Activated CD4-positive, alpha-beta T cell treated with anti-CD3 and anti-CD28 coated beads, Interleukin-2, amount 10 ng/mL, durations not matched to agents 24 days and 14 days (primary cell): ENCODE measurements at regions of chr10 and their contacts with region 1.

Region 1: GRCh38 chr10:132446661-132447194 is 49.7 kb downstream of the PWWP2B start:
- DNase-seq: peak; percentile 91
- H3K4me3 Mint-ChIP-seq: peak overlapping the region; percentile 76
- H3K27ac Mint-ChIP-seq: peak overlapping the region; percentile 97
- H3K4me1 Mint-ChIP-seq: peaks cover 29% of the 10 kb centered on the region
- H3K27me3 Mint-ChIP-seq: no peaks in the 10 kb centered on the region

Region 2: DNA sequence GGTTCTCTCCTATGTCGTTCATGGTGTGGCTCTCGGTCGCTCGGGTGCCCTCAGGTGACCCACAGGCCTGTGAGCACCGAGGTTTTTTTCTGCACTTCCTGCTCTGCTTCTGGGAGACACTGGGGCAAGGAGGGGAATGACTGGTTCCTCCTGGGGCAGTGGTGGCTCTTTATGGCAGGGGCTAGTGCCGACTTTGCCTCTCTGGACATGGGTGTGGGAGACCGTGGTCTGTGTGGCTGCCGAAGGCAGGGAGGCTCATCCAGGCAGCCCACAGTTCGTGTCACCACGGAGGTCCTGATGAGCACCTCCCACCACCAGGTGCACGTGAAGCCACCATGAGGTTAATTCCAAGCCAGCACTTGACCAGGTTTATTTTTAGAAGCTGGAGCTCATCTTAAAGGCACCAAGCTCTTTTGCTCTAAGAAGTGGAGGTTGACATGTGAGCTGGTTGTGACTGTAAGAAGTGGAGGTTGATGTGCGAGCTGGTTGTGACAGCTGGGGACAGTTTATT is 284.7 kb before region 1 on chr10:
- intact Hi-C with region 1: loop called (anchors 1 kb)
- DNase-seq: peak; percentile 89
- H3K4me3 Mint-ChIP-seq: peak overlapping the region; percentile 83
- H3K27ac Mint-ChIP-seq: peak overlapping the region; percentile 99
- H3K4me1 Mint-ChIP-seq: peaks cover 41% of the 10 kb centered on the region
- H3K27me3 Mint-ChIP-seq: no peaks in the 10 kb centered on the region

Region 3: GRCh38 chr10:132307823-132308587 is 138.7 kb before region 1 on chr10 and contains the start of gene STK32C:
- intact Hi-C with region 1: loop called (anchors 5 kb)
- DNase-seq: peak; percentile 94
- H3K4me3 Mint-ChIP-seq: peak within 1 kb of the TSS; percentile 91
- H3K27ac Mint-ChIP-seq: peak within 1 kb of the TSS; percentile 82
- H3K4me1 Mint-ChIP-seq: peaks cover 5% of the 10 kb centered on the region
- H3K27me3 Mint-ChIP-seq: peaks cover 46% of the 10 kb centered on the region
- total RNA-seq, gene STK32C: 15.2 and 18.4 TPM in 2 replicates

Region 4: DNA sequence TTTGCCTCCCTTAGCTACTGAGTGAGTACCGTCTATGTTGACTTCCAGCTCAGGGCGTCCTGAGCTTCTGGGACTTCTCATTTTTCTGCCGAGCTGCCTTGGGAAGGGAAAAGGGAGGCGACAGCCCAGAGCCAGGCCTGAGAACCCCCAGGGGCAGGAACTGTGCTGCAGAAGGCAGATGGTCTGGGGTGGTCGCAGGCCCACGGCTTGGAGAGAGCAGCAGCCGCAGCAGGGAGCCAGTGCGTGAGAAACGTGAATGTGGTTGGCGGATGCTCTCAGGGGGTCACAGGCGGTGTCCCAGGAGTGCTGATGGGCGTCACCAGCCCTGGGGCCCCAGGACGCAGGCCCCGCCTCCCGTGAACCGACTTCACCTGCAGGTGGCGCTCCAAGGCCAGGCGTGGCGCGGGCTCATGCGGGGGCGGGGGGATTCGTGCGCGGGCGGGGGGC is 58.9 kb before region 1 on chr10:
- intact Hi-C with region 1: loop called (anchors 2 kb)
- DNase-seq: peak; percentile 95
- H3K4me3 Mint-ChIP-seq: peak overlapping the region; percentile 55
- H3K27ac Mint-ChIP-seq: peak overlapping the region; percentile 93
- H3K4me1 Mint-ChIP-seq: peaks cover 5% of the 10 kb centered on the region
- H3K27me3 Mint-ChIP-seq: peaks cover 3% of the 10 kb centered on the region

Region 5: GRCh38 chr10:132434405-132435005 is 12.2 kb before region 1 on chr10:
- intact Hi-C with region 1: loop called (anchors 1 kb)
- DNase-seq: peak; percentile 87
- H3K4me3 Mint-ChIP-seq: peak overlapping the region; percentile 40
- H3K27ac Mint-ChIP-seq: peak overlapping the region; percentile 49
- H3K4me1 Mint-ChIP-seq: peaks cover 4% of the 10 kb centered on the region
- H3K27me3 Mint-ChIP-seq: no peaks in the 10 kb centered on the region